ENCODE measurements at regions of chr22 and their contacts with region 1.

Region 1: GRCh38 chr22:49767355-49768062 is 60.2 kb downstream of the BRD1 start:
- DNase-seq: peak in 1 of 2 donors; percentile 43
- H3K4me3 ChIP-seq: no peak overlapping the region
- H3K27ac ChIP-seq: no peak overlapping the region
- H3K4me1 ChIP-seq: no peaks in the 10 kb centered on the region
- H3K27me3 ChIP-seq: no peaks in the 10 kb centered on the region
- CTCF ChIP-seq: peak in 2 of 3 donors; percentile 33 to 51
- POLR2A ChIP-seq: no peak

Region 2: GRCh38 chr22:50058906-50059880 is 291.7 kb after region 1 on chr22:
- intact Hi-C with region 1: loop called (anchors 10 kb)
- DNase-seq: no peak
- H3K4me3 ChIP-seq: peak overlapping the region in 2 of 3 donors; percentile 18 to 57
- H3K27ac ChIP-seq: no peak overlapping the region
- H3K4me1 ChIP-seq: no peaks in the 10 kb centered on the region
- H3K27me3 ChIP-seq: peaks cover 6 to 39% of the 10 kb centered on the region in 2 donors
- CTCF ChIP-seq: no peak
- POLR2A ChIP-seq: no peak

Measured in breast epithelium (tissue), 4 donors.